PC-3 (cell line): ENCODE measurements at regions of chr17 and their contacts with region 1.

Region 1: DNA sequence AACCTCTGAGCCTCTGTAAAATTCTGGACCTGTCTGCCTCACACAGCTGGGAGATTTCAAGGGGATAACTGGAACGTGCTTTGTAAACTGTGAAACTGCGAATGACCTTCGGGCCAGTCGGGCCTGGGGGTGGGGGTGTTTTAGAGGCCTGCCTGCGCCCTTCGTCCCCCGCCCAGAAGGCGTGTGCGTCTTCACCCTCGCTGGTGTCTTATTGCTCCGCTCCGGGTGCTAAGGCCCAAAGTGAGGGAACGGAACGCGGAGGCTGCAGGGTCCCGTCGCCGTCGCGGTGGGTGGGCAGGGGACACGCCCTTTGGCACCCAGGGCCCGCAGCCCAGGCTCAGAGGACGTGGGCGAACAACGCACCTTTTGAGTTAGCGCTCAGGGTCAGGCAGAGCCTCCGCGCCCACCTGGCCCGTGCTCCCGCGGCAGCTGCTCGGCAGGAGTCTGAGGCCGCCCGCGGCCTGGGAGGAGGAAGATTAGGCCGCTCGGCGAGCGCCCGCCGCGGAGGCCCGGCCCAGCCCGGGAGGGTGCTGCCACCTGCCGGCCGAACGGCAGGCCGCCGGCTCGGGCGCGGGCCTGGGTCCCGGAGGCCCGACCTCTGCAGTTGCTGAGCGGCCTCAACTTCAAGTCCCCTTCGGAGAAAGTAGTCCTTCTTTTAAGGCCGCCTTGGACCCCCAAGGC is 29.7 kb downstream of the DCAKD start:
- DNase-seq: peak; percentile 79
- ATAC-seq: peak; percentile 68
- H3K4me3 ChIP-seq: peak overlapping the region; percentile 51
- H3K27ac ChIP-seq: no peak overlapping the region
- H3K4me1 ChIP-seq: peaks cover 19% of the 10 kb centered on the region; the same call in 1 of the 2 replicates
- H3K27me3 ChIP-seq: no peaks in the 10 kb centered on the region
- CTCF ChIP-seq: peak; percentile 96

Region 2: GRCh38 chr17:44758414-44759085 is 263.2 kb before region 1 on chr17 and contains the start of gene ADAM11:
- CTCF ChIA-PET with region 1: interaction called, 10 read pairs
- POLR2A ChIA-PET with region 1: no interaction called
- intact Hi-C with region 1: no loop called
- DNase-seq: no peak
- ATAC-seq: peak; percentile 52
- H3K4me3 ChIP-seq: peak within 1 kb of the TSS; percentile 68
- H3K27ac ChIP-seq: no peak within 1 kb of the TSS
- H3K4me1 ChIP-seq: peaks cover 4% of the 10 kb centered on the region; the same call in 1 of the 2 replicates
- H3K27me3 ChIP-seq: 0 out of 2 replicates have a peak, but pooled peaks cover 5% of the 10 kb centered on the region
- CTCF ChIP-seq: no peak
- total RNA-seq, gene ADAM11: 2.7 and 2.9 TPM in 2 replicates

Region 3: GRCh38 chr17:44900894-44901293 is 120.9 kb before region 1 on chr17:
- CTCF ChIA-PET with region 1: interaction called, 4 read pairs
- POLR2A ChIA-PET with region 1: no interaction called
- intact Hi-C with region 1: loop called (anchors 5 kb)
- DNase-seq: peak; percentile 76
- ATAC-seq: peak; percentile 37
- H3K4me3 ChIP-seq: no peak overlapping the region; the same call in 1 of the 2 replicates
- H3K27ac ChIP-seq: peak overlapping the region; percentile 63
- H3K4me1 ChIP-seq: peaks cover 41% of the 10 kb centered on the region
- H3K27me3 ChIP-seq: no peaks in the 10 kb centered on the region
- CTCF ChIP-seq: no peak

Region 4: GRCh38 chr17:44919885-44920564 is 101.7 kb before region 1 on chr17:
- CTCF ChIA-PET with region 1: interaction called, 45 read pairs
- POLR2A ChIA-PET with region 1: interaction called, 3 read pairs
- intact Hi-C with region 1: loop called (anchors 1 kb)
- DNase-seq: peak; percentile 93
- ATAC-seq: peak; percentile 90
- H3K4me3 ChIP-seq: no peak overlapping the region
- H3K27ac ChIP-seq: no peak overlapping the region
- H3K4me1 ChIP-seq: peaks cover 24% of the 10 kb centered on the region
- H3K27me3 ChIP-seq: no peaks in the 10 kb centered on the region
- CTCF ChIP-seq: peak; percentile 98

Region 5: DNA sequence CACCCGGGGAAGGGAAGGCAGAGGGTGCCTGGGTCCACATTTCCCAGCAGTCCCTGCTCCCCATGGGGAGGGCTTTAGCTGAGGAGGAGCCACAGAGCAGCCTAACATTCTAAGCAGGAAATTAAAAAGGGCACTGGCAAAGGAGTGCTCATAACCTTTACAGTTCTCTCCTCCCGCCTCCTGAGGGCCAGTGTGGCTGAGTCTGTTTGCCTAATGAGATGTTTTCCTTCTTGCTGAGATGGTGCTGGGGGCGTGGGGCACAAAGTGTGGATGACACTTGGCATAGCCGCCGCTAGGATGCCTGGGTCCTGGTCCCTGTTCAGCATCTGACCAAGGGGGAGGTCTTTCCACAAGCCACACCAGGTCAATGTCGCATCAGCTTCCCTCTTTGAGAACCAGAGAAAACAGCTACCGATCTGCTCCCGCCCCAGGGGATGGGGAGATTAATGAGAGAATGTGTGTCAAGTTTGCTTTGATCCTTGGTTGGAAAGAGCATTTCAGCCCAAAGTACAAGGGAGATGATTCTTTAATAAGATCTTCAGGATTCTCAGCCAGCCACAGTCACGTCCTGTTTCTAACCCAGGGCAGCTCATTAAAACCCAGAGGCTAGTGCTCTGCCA is 79.9 kb before region 1 on chr17:
- CTCF ChIA-PET with region 1: interaction called, 3 read pairs
- POLR2A ChIA-PET with region 1: interaction called, 3 read pairs
- intact Hi-C with region 1: loop called (anchors 5 kb)
- DNase-seq: no peak
- ATAC-seq: peak; percentile 64
- H3K4me3 ChIP-seq: no peak overlapping the region
- H3K27ac ChIP-seq: no peak overlapping the region
- H3K4me1 ChIP-seq: peaks cover 56% of the 10 kb centered on the region
- H3K27me3 ChIP-seq: no peaks in the 10 kb centered on the region
- CTCF ChIP-seq: no peak

Region 6: DNA sequence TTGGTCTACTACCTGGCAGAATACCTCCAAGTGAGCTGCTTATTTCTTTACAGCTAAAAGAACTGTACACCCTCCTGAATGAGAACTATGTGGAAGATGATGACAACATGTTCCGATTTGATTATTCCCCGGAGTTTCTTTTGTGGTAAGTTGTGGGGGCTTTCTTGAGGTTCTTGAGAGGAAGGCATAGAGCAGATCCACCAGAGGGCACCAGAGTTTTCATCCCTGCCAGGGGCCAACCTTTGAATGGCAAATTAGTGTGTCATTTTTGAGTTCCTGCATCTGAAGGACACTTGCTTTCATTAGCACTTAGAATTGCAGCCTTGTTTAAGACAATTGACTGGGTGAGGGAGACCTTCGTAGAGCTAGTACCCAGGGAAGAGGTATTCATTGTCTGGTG is 74.4 kb after region 1 on chr17:
- CTCF ChIA-PET with region 1: no interaction called
- POLR2A ChIA-PET with region 1: no interaction called
- intact Hi-C with region 1: loop called (anchors 1 kb)
- DNase-seq: peak; percentile 61
- ATAC-seq: no peak
- H3K4me3 ChIP-seq: no peak overlapping the region
- H3K27ac ChIP-seq: no peak overlapping the region
- H3K4me1 ChIP-seq: peaks cover 21% of the 10 kb centered on the region
- H3K27me3 ChIP-seq: no peaks in the 10 kb centered on the region
- CTCF ChIP-seq: peak; percentile 87